Activated CD4-positive, alpha-beta T cell treated with anti-CD3 and anti-CD28 coated beads, Interleukin-2, amount 10 ng/mL, durations not matched to agents 24 days and 14 days (primary cell): ENCODE measurements at regions of chr5 and their contacts with region 1.

Region 1: DNA sequence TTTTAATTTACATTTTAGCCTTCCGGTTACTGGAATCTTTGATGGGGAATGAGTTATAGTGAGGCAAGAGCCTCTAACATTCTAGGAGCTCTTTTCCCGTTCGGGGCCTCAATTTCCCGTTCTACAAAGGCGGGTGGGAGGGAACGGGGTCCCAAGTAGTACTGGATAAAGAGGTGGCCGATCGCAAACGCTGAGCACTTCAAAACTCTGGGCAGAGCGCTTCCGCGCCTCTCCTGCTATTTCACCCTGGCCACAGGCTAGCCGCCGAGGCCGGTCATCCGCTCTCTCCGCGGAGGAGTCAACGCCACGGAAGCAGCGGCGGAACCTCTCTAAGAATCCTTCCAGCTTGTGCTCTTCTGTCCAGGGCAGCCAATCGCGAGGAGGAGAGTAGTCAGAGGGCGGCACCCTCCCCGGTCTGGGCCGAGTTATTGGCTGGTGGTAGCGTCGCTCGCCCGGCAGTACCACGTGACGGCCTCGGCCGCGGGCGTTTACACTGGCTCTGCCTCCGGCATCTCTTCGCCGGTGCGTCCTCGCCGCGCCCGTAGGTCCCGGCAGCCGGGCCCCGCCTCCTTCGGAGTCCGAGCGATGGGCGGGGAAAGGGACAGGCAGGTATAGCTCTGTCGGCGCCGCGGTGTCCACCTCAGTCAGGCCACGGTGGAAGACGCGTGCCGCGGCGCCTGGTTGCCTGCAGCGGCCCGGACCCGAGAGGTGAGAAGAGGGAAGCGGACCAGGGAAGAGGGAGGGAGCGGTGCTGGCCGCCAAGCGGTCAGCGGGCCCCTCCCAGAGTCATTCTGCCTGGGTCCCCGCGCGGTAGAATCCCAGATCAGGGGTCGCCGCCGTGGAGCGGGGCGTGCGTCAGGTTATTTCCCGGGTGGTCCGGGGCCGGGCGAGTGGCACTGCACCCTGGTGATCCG is at the start of gene SLC26A2:
- DNase-seq: peak; percentile 98
- H3K4me3 Mint-ChIP-seq: peak within 1 kb of the TSS; percentile 97
- H3K27ac Mint-ChIP-seq: peak within 1 kb of the TSS; percentile 100
- H3K4me1 Mint-ChIP-seq: peaks cover 28% of the 10 kb centered on the region
- H3K27me3 Mint-ChIP-seq: no peaks in the 10 kb centered on the region
- total RNA-seq, gene SLC26A2: 8.3 and 9.0 TPM in 2 replicates

Region 2: DNA sequence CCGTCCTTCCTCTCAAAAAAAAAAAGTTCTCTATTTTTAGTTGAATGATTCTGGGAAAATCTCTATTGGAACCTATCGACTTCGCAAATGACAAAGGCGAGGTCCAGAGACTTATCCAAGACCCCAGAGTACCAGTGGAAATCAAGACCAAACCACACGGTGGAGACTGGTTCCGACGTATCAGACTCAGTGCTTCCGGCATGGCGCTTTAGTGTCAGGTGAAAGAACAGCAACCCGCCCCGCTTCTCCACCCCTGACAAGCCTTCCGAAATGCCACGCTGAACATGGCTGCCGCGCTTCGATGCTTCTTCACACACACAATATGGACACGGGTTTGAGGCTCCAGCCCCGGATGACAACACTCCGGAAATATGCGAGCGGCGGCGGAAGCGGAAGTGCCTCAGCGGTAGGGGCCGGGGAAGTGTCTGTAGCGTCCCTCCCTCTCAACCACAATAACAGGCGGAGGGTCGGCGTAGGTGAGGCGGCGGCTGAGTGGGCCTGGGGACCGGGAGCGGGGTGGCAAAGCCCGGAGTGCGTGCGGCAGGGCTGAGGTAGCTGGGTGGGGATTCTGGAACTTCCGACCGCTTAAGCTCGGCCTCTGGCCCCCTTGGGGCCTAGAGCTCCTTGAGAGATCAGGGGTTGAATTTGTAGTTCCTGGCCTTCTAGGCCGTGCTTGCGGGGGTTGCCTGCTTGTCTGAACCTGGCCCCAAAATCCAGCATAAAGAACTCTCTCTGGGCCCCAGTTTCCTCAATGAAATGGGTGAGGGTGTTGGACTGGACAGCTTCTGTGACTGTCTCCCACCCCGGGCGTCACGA is 1576.8 kb before region 1 on chr5 and contains the start of gene FBXO38:
- intact Hi-C with region 1: loop called (anchors 5 kb)
- DNase-seq: peak; percentile 99
- H3K4me3 Mint-ChIP-seq: peak within 1 kb of the TSS; percentile 91
- H3K27ac Mint-ChIP-seq: peak within 1 kb of the TSS; percentile 95
- H3K4me1 Mint-ChIP-seq: peaks cover 51% of the 10 kb centered on the region
- H3K27me3 Mint-ChIP-seq: no peaks in the 10 kb centered on the region
- total RNA-seq, gene FBXO38: 57.3 and 62.9 TPM in 2 replicates

Region 3: GRCh38 chr5:149731639-149732323 is 228.7 kb before region 1 on chr5:
- intact Hi-C with region 1: loop called (anchors 1 kb)
- DNase-seq: peak; percentile 87
- H3K4me3 Mint-ChIP-seq: peak overlapping the region; percentile 87
- H3K27ac Mint-ChIP-seq: peak overlapping the region; percentile 87
- H3K4me1 Mint-ChIP-seq: peaks cover 7% of the 10 kb centered on the region
- H3K27me3 Mint-ChIP-seq: peaks cover 10% of the 10 kb centered on the region

Region 4: GRCh38 chr5:149940077-149940574 is 20.4 kb before region 1 on chr5:
- intact Hi-C with region 1: loop called (anchors 1 kb)
- DNase-seq: no peak
- H3K4me3 Mint-ChIP-seq: no peak overlapping the region
- H3K27ac Mint-ChIP-seq: no peak overlapping the region
- H3K4me1 Mint-ChIP-seq: peaks cover 6% of the 10 kb centered on the region
- H3K27me3 Mint-ChIP-seq: no peaks in the 10 kb centered on the region

Region 5: GRCh38 chr5:149979896-149980295 is 19.4 kb after region 1 on chr5:
- intact Hi-C with region 1: no loop called
- DNase-seq: no peak
- H3K4me3 Mint-ChIP-seq: no peak overlapping the region
- H3K27ac Mint-ChIP-seq: no peak overlapping the region
- H3K4me1 Mint-ChIP-seq: no peaks in the 10 kb centered on the region
- H3K27me3 Mint-ChIP-seq: no peaks in the 10 kb centered on the region

Region 6: GRCh38 chr5:150000256-150000989 is 39.9 kb after region 1 on chr5 and contains the starts of genes HMGXB3 and TIGD6:
- intact Hi-C with region 1: loop called (anchors 1 kb)
- DNase-seq: peak; percentile 96
- H3K4me3 Mint-ChIP-seq: peak within 1 kb of the TSS; percentile 86
- H3K27ac Mint-ChIP-seq: peak within 1 kb of the TSS; percentile 97
- H3K4me1 Mint-ChIP-seq: peaks cover 41% of the 10 kb centered on the region
- H3K27me3 Mint-ChIP-seq: no peaks in the 10 kb centered on the region
- total RNA-seq, gene HMGXB3: 43.1 and 47.8 TPM in 2 replicates
- total RNA-seq, gene TIGD6: 2.5 TPM in 2 replicates

Region 7: DNA sequence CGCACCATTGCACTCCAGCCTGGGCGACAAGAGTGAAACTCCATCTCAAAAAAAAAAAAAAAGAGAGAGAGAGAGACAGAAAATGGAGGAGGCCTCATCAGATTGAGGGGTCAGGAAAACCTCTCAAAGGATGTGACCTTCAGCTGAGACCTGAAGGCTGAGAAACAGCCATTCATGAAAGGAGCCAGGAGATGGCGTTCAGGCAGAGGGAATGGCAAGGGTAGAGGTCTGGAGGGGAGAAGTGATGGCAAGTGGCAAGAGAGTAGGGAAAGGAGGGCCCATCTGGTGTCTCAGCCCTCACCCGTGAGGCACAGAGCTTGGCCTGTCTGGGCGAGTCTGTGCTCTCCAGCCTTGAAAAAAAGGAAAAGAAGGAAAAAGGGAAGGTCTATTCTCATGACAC is 312.0 kb after region 1 on chr5:
- intact Hi-C with region 1: no loop called
- DNase-seq: no peak
- H3K4me3 Mint-ChIP-seq: no peak overlapping the region
- H3K27ac Mint-ChIP-seq: no peak overlapping the region
- H3K4me1 Mint-ChIP-seq: no peaks in the 10 kb centered on the region
- H3K27me3 Mint-ChIP-seq: peaks cover 9% of the 10 kb centered on the region